Calu3 (cell line): ENCODE measurements at regions of chr3 and their contacts with region 1.

Region 1: GRCh38 chr3:70137366-70137765 is 137.8 kb downstream of the SAMMSON start:
- DNase-seq: no peak
- H3K4me3 Mint-ChIP-seq: no peak overlapping the region
- H3K27ac Mint-ChIP-seq: no peak overlapping the region
- H3K4me1 Mint-ChIP-seq: peaks cover 9% of the 10 kb centered on the region
- H3K27me3 Mint-ChIP-seq: no peaks in the 10 kb centered on the region
- CTCF ChIP-seq: no peak

Region 2: DNA sequence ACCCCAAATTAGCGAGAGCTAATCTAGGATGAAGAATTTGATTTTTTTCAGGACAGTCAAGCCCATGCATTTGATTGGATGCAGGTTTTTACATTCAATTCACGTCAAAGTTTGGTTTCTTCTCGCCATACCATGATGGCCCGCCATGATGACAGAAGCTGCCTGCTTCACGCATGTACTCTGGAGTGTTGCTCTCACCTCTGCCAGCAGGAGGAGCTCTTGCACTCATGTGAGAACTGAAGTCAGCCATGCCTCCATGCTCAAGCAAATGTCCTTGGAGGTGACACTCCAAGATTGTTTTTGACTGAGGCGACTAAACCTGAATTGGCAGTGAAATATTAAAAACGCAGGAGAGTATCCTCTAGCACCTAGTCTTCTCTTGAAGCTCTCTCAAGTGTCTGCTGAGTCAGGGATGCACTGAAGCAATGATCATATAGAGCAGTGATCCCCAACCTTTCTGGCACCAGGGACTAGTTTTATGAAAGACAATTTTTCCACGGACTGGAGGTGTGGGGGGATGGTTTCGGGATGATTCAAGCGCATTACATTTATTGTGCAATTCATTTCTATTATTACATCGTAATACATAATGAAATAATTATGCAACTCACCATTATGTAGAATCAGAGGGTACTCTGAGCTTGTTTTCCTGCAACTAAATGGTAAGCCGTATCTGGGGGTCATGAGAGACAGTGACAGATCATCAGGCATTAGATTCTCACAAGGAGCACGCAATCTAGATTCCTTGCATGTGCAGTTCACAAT is 16.8 kb before region 1 on chr3:
- CTCF ChIA-PET with region 1: interaction called, 5 read pairs
- intact Hi-C with region 1: loop called (anchors 2 kb)
- DNase-seq: peak; percentile 88
- H3K4me3 Mint-ChIP-seq: no peak overlapping the region
- H3K27ac Mint-ChIP-seq: no peak overlapping the region
- H3K4me1 Mint-ChIP-seq: no peaks in the 10 kb centered on the region
- H3K27me3 Mint-ChIP-seq: no peaks in the 10 kb centered on the region
- CTCF ChIP-seq: peak; percentile 78

Region 3: DNA sequence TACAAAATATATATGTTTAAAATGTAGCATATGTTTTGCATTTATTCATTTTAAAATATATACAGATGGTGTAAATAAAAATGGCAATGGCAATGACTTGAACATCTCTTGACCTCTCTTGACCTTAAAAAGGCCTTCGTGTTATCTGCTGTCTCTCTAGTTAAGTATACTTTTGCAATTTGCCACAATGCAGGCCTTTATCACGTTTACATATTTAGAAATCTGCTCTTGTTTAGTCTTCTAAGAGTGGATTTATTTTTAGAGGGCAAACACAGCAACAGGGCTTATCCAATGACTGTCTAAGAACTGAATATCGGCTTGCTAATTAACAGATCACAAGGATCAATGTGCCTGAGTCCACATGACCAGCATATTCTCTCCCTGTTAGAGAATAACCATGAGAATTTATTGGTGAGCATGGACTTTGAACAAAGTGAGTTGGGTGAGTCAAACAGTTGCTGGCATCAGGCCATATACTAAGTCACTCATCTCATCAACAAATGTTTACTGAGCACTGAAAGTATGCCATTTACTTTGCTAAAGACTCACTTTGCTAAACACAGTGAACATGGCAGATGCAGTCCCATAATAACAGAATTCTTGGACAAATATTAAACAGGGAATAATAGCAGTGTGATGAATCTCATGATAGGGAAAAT is 126.9 kb after region 1 on chr3:
- CTCF ChIA-PET with region 1: no interaction called
- intact Hi-C with region 1: loop called (anchors 5 kb)
- DNase-seq: peak; percentile 66
- H3K4me3 Mint-ChIP-seq: peak overlapping the region; percentile 60
- H3K27ac Mint-ChIP-seq: peak overlapping the region; percentile 97
- H3K4me1 Mint-ChIP-seq: peaks cover 52% of the 10 kb centered on the region
- H3K27me3 Mint-ChIP-seq: no peaks in the 10 kb centered on the region
- CTCF ChIP-seq: no peak